Calu3 (cell line): ENCODE measurements at regions of chrX and their contacts with region 1.

Region 1: DNA sequence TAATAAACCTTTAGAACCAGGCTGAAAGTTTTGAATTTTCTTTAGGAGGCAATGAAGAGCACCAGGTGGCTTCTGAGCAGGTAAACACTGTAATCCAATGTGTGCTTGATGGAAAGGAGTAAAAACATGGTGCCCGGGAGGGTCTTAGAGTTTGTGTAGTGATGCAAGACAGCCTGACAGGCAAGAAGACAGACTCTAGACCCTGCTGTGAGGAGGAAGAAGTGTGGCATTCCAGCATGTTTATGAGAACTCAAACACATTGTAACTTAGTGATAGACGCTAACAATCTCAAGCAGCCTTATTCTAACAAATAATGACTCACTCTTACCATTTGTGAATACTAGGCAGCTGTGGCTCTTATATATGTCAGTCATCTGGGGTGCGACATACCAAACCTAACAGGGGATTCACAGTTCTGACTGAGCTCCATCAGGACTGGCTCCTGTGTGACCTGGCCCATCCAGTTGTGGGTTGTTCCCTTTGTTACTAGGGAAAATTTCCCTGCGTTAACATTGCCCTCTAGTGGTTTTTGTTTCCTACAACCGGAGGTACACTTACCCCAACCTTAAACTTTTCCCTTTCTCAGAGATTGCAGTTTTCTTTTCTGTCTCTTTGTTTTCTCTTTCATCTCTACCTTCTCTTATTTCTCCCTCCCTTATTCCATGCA is 53.8 kb downstream of the VSIG4 start:
- DNase-seq: peak; percentile 57
- H3K4me3 Mint-ChIP-seq: no peak overlapping the region
- H3K27ac Mint-ChIP-seq: peak overlapping the region; percentile 2
- H3K4me1 Mint-ChIP-seq: no peaks in the 10 kb centered on the region
- H3K27me3 Mint-ChIP-seq: no peaks in the 10 kb centered on the region
- CTCF ChIP-seq: peak; percentile 26

Region 2: DNA sequence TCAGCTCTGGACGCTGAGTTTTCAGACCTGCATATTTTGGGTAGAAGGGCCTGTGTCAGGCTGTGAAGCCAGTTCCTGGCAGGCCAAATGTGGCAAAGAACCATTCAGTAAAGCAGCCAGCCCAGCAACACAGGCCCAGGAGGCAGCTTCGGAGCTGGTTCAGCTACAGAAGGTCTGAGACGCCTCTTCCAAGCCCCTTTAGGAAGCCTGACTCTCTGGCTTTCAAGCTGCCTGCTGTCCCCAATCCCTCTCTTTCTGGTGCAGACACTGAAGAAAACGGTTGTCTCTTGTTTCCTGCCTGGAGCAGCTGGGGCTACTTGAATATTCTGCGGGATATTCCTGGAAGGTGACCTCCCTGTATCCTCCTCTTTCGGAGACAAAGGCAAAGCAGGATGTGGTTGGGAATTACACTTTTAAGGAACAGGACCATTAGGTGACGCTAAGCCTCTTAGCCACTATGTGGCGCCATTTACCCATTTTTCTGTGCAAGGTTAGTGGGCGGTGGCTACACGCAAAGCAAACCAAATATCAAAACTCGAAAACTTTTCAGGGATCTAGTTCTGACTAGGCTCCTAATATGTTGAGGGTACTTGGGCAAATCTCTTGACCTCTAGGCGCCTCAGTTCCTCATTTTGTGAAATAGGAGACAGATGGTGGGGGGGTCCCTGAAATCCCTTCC is 404.3 kb before region 1 on chrX:
- CTCF ChIA-PET with region 1: interaction called, 4 read pairs
- intact Hi-C with region 1: loop called (anchors 1 kb)
- DNase-seq: peak; percentile 60
- H3K4me3 Mint-ChIP-seq: no peak overlapping the region
- H3K27ac Mint-ChIP-seq: no peak overlapping the region
- H3K4me1 Mint-ChIP-seq: peaks cover 8% of the 10 kb centered on the region
- H3K27me3 Mint-ChIP-seq: peaks cover 27% of the 10 kb centered on the region
- CTCF ChIP-seq: peak; percentile 38

Region 3: DNA sequence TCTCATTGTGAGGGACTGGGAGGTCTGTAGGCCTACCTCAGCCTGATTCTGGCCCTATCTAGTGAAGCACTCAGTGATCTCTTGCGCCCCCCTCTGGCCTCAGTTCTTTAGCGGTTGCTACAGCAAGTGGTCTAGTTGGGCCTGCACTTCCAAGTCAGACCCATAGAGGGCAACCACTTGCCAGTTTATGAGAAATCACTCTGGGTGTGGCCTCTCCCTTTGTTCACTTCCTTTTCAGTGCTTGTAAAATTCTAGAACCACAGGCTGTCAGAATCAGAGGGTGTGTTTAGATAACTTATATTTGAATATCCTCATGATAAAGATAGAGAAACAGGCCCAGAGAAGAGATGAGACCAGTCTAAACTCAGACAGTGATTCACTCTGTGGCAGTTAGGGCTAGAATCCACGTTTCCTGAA is 390.6 kb before region 1 on chrX:
- CTCF ChIA-PET with region 1: interaction called, 3 read pairs
- intact Hi-C with region 1: loop called (anchors 1 kb)
- DNase-seq: peak; percentile 90
- H3K4me3 Mint-ChIP-seq: no peak overlapping the region
- H3K27ac Mint-ChIP-seq: no peak overlapping the region
- H3K4me1 Mint-ChIP-seq: no peaks in the 10 kb centered on the region
- H3K27me3 Mint-ChIP-seq: peaks cover 14% of the 10 kb centered on the region
- CTCF ChIP-seq: peak; percentile 91

Region 4: GRCh38 chrX:65706041-65706828 is 279.8 kb before region 1 on chrX:
- CTCF ChIA-PET with region 1: no interaction called
- intact Hi-C with region 1: loop called (anchors 1 kb)
- DNase-seq: peak; percentile 20
- H3K4me3 Mint-ChIP-seq: peak overlapping the region; percentile 28
- H3K27ac Mint-ChIP-seq: peak overlapping the region; percentile 72
- H3K4me1 Mint-ChIP-seq: peaks cover 28% of the 10 kb centered on the region
- H3K27me3 Mint-ChIP-seq: no peaks in the 10 kb centered on the region
- CTCF ChIP-seq: no peak

Region 5: DNA sequence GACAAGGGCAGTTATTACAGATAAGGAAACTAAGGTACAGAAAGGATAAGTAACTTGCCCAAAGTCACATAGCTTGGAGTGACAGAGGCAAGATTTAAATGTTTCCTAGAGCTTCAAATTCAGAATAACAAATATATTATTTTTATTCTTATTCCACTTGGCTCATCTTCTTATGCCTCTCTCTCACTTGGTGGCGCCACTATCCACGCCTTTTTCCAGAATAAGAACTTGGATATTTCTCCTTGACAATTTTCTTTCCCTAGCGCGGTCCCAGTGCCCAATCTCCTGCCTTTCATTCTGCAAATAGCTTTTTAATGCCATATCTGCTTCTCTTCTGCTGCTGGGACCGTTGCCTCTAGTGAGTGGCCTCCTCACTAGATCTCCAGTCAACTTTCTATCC is 240.1 kb before region 1 on chrX:
- CTCF ChIA-PET with region 1: interaction called, 3 read pairs
- intact Hi-C with region 1: loop called (anchors 2 kb)
- DNase-seq: no peak
- H3K4me3 Mint-ChIP-seq: no peak overlapping the region
- H3K27ac Mint-ChIP-seq: peak overlapping the region; percentile 25
- H3K4me1 Mint-ChIP-seq: peaks cover 24% of the 10 kb centered on the region
- H3K27me3 Mint-ChIP-seq: no peaks in the 10 kb centered on the region
- CTCF ChIP-seq: no peak

Region 6: GRCh38 chrX:65871661-65872311 is 114.3 kb before region 1 on chrX:
- CTCF ChIA-PET with region 1: interaction called, 20 read pairs
- intact Hi-C with region 1: loop called (anchors 1 kb)
- DNase-seq: peak; percentile 73
- H3K4me3 Mint-ChIP-seq: no peak overlapping the region
- H3K27ac Mint-ChIP-seq: peak overlapping the region; percentile 57
- H3K4me1 Mint-ChIP-seq: peaks cover 17% of the 10 kb centered on the region
- H3K27me3 Mint-ChIP-seq: no peaks in the 10 kb centered on the region
- CTCF ChIP-seq: peak; percentile 42